ENCODE measurements at regions of chr16 and their contacts with region 1.

Region 1: GRCh38 chr16:11025120-11025531 is 80.8 kb downstream of the CLEC16A start:
- DNase-seq: no peak
- ATAC-seq: peak; percentile 83
- H3K4me3 Mint-ChIP-seq: no peak overlapping the region
- H3K27ac Mint-ChIP-seq: peak overlapping the region; percentile 59
- H3K4me1 Mint-ChIP-seq: peaks cover 12% of the 10 kb centered on the region
- H3K27me3 Mint-ChIP-seq: no peaks in the 10 kb centered on the region
- CTCF ChIP-seq: no peak

Region 2: DNA sequence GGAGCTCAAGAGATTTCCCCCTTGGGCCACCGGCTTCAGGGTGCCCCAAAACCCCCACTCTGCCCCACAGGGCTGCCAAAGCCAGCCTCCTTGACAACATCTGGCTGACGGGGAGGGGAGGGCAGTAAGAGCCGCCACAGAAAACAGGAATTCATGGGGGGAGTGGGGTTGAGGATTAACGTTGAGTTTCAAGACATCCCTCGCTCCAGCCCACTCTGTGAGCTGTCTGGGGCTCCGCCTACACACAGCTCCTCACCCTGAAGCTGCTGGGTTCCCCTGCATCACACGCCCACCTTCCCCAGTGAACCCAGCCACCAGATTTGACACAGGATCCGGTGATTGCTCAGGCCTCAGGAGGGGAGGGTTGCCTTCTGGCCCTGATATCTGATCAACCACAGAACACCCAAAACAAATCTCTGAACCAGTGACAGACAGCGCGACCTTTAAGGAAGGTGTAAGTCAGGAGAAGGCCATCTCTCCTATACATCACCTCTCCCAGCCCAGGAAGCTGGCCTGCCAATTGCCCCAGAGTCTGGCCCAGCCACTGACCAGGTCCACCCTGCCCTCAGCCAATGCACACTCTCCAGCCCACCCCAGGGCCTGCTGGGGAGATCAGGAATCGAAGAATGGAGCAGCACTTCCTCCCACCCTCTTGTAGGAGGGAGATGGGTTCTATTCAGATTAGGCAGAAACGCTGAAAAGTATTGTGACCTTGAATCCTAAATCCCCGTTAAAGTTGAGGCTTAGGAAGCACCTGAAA is 51.3 kb after region 1 on chr16:
- CTCF ChIA-PET with region 1: no interaction called
- POLR2A ChIA-PET with region 1: no interaction called
- intact Hi-C with region 1: loop called (anchors 2 kb)
- DNase-seq: peak; percentile 93
- ATAC-seq: peak; percentile 88
- H3K4me3 Mint-ChIP-seq: no peak overlapping the region
- H3K27ac Mint-ChIP-seq: peak overlapping the region; percentile 91
- H3K4me1 Mint-ChIP-seq: peaks cover 90% of the 10 kb centered on the region
- H3K27me3 Mint-ChIP-seq: no peaks in the 10 kb centered on the region
- CTCF ChIP-seq: no peak

Measured in activated CD8-positive, alpha-beta T cell treated with anti-CD3 and anti-CD28 coated beads for 36 hours (primary cell).